ENCODE measurements at regions of chr19 and their contacts with region 1.

Region 1: DNA sequence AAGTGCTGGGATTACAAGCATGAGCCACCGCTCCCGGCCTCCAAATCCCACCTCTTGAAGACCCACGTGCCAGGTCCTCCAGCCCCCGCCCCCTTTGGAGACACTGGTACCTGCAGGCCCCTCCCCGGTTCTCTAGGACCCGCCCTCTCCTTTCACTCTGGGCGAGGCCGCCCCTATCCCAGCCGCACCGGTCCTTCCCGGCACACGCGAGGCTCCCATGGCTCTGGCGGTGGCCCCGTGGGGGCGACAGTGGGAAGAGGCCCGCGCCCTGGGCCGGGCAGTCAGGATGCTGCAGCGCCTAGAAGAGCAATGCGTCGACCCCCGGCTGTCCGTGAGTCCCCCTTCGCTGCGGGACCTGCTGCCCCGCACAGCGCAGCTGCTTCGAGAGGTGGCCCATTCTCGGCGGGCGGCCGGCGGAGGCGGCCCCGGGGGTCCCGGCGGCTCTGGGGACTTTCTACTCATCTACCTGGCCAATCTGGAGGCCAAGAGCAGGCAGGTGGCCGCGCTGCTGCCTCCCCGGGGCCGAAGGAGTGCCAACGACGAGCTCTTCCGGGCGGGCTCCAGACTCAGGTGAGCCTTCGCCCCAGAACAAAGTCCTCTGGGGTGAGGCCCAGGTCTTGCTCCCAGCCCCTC is at the start of gene CBLC:
- DNase-seq: peak; percentile 92
- H3K4me3 ChIP-seq: peak within 1 kb of the TSS; percentile 34 to 59 (median 52)
- H3K27ac ChIP-seq: peak within 1 kb of the TSS; percentile 83 to 95 (median 90)
- H3K4me1 ChIP-seq: peaks cover 0 to 69% (median 28%) of the 10 kb centered on the region in 4 donors
- H3K27me3 ChIP-seq: peaks cover 8% of the 10 kb centered on the region
- CTCF ChIP-seq: peak in 3 of 5 experiments; percentile 9 to 36 (median 31)
- EP300 ChIP-seq: no peak
- POLR2A ChIP-seq: peak; percentile 94
- total RNA-seq, gene CBLC: 96.1 to 210 (median 145) TPM

Region 2: GRCh38 chr19:44576843-44577565 is 200.8 kb before region 1 on chr19:
- in situ Hi-C with region 1: loop called in 1 of 4 experiments (anchors 25 kb)
- intact Hi-C with region 1: no loop called
- DNase-seq: peak; percentile 57
- H3K4me3 ChIP-seq: no peak overlapping the region
- H3K27ac ChIP-seq: no peak overlapping the region
- H3K4me1 ChIP-seq: peaks cover 0 to 15% (median 0%) of the 10 kb centered on the region in 4 donors
- H3K27me3 ChIP-seq: no peaks in the 10 kb centered on the region
- CTCF ChIP-seq: peak; percentile 43 to 74 (median 59)
- EP300 ChIP-seq: no peak
- POLR2A ChIP-seq: no peak

Region 3: GRCh38 chr19:45047188-45047797 is 269.5 kb after region 1 on chr19:
- in situ Hi-C with region 1: no loop called
- intact Hi-C with region 1: no loop called
- DNase-seq: no peak
- H3K4me3 ChIP-seq: no peak overlapping the region
- H3K27ac ChIP-seq: no peak overlapping the region
- H3K4me1 ChIP-seq: peaks cover 9 to 49% (median 39%) of the 10 kb centered on the region in 4 donors
- H3K27me3 ChIP-seq: no peaks in the 10 kb centered on the region
- CTCF ChIP-seq: no peak
- EP300 ChIP-seq: no peak
- POLR2A ChIP-seq: no peak